CD14-positive monocyte (primary cell): ENCODE measurements at regions of chr19 and their contacts with region 1.

Region 1: GRCh38 chr19:16324384-16325160 is at the start of gene KLF2:
- DNase-seq: peak; percentile 95 to 97 (median 97)
- H3K4me3 ChIP-seq: peak within 1 kb of the TSS; percentile 65 to 98 (median 84)
- H3K4me3 Mint-ChIP-seq: peak within 1 kb of the TSS; percentile 72 to 100
- H3K27ac ChIP-seq: peak within 1 kb of the TSS; percentile 94 to 96
- H3K27ac Mint-ChIP-seq: peak within 1 kb of the TSS; percentile 79 to 98 (median 97)
- H3K4me1 ChIP-seq: peaks cover 29 to 56% of the 10 kb centered on the region in 2 donors
- H3K4me1 Mint-ChIP-seq: peaks cover 36% of the 10 kb centered on the region
- H3K27me3 ChIP-seq: peaks cover 0 to 5% of the 10 kb centered on the region in 2 donors
- H3K27me3 Mint-ChIP-seq: peaks cover 14 to 21% (median 16%) of the 10 kb centered on the region in 3 donors
- CTCF ChIP-seq: no peak
- polyA plus RNA-seq, gene KLF2: 34.0 to 331 (median 51.4) TPM

Region 2: GRCh38 chr19:16168465-16169081 is 156.0 kb before region 1 on chr19:
- intact Hi-C with region 1: no loop called
- DNase-seq: peak; percentile 68 to 78 (median 73)
- H3K4me3 ChIP-seq: no peak overlapping the region
- H3K4me3 Mint-ChIP-seq: peak overlapping the region in 1 of 2 donors; percentile 57
- H3K27ac ChIP-seq: peak overlapping the region; percentile 63 to 81
- H3K27ac Mint-ChIP-seq: peak overlapping the region; percentile 69 to 92 (median 87)
- H3K4me1 ChIP-seq: peaks cover 22 to 32% of the 10 kb centered on the region in 2 donors
- H3K4me1 Mint-ChIP-seq: peaks cover 27% of the 10 kb centered on the region
- H3K27me3 ChIP-seq: no peaks in the 10 kb centered on the region
- H3K27me3 Mint-ChIP-seq: peaks cover 0 to 2% (median 0%) of the 10 kb centered on the region in 3 donors
- CTCF ChIP-seq: no peak

Region 3: GRCh38 chr19:16197622-16198369 is 126.8 kb before region 1 on chr19 and contains the start of gene AP1M1:
- intact Hi-C with region 1: loop called in 1 of 2 experiments (anchors 5 kb)
- DNase-seq: peak; percentile 98 to 100 (median 98)
- H3K4me3 ChIP-seq: peak within 1 kb of the TSS; percentile 96 to 98 (median 96)
- H3K4me3 Mint-ChIP-seq: peak within 1 kb of the TSS; percentile 82 to 89
- H3K27ac ChIP-seq: peak within 1 kb of the TSS; percentile 59 to 89
- H3K27ac Mint-ChIP-seq: peak within 1 kb of the TSS; percentile 88 to 96 (median 95)
- H3K4me1 ChIP-seq: peaks cover 30 to 40% of the 10 kb centered on the region in 2 donors
- H3K4me1 Mint-ChIP-seq: peaks cover 34% of the 10 kb centered on the region
- H3K27me3 ChIP-seq: no peaks in the 10 kb centered on the region
- H3K27me3 Mint-ChIP-seq: no peaks in the 10 kb centered on the region
- CTCF ChIP-seq: no peak
- polyA plus RNA-seq, gene AP1M1: 103 to 134 (median 133) TPM

Region 4: GRCh38 chr19:16247353-16248182 is 77.0 kb before region 1 on chr19:
- intact Hi-C with region 1: loop called (anchors 5 kb)
- DNase-seq: peak; percentile 81 to 88 (median 84)
- H3K4me3 ChIP-seq: peak overlapping the region in 2 of 3 experiments; percentile 5 to 22
- H3K4me3 Mint-ChIP-seq: peak overlapping the region; percentile 51 to 78
- H3K27ac ChIP-seq: peak overlapping the region in 1 of 2 donors; percentile 7
- H3K27ac Mint-ChIP-seq: peak overlapping the region; percentile 71 to 90 (median 84)
- H3K4me1 ChIP-seq: peaks cover 24 to 29% of the 10 kb centered on the region in 2 donors
- H3K4me1 Mint-ChIP-seq: peaks cover 24% of the 10 kb centered on the region
- H3K27me3 ChIP-seq: no peaks in the 10 kb centered on the region
- H3K27me3 Mint-ChIP-seq: peaks cover 1 to 5% (median 3%) of the 10 kb centered on the region in 3 donors
- CTCF ChIP-seq: peak; percentile 94

Region 5: GRCh38 chr19:16283210-16284061 is 41.1 kb before region 1 on chr19:
- intact Hi-C with region 1: loop called (anchors 2 kb)
- DNase-seq: peak; percentile 68 to 76 (median 72)
- H3K4me3 ChIP-seq: peak overlapping the region; percentile 4 to 60 (median 17)
- H3K4me3 Mint-ChIP-seq: peak overlapping the region; percentile 73 to 83
- H3K27ac ChIP-seq: peak overlapping the region; percentile 92 to 93
- H3K27ac Mint-ChIP-seq: peak overlapping the region; percentile 97 to 99 (median 98)
- H3K4me1 ChIP-seq: peaks cover 73 to 87% of the 10 kb centered on the region in 2 donors
- H3K4me1 Mint-ChIP-seq: peaks cover 85% of the 10 kb centered on the region
- H3K27me3 ChIP-seq: no peaks in the 10 kb centered on the region
- H3K27me3 Mint-ChIP-seq: peaks cover 3 to 19% (median 3%) of the 10 kb centered on the region in 3 donors
- CTCF ChIP-seq: no peak

Region 6: DNA sequence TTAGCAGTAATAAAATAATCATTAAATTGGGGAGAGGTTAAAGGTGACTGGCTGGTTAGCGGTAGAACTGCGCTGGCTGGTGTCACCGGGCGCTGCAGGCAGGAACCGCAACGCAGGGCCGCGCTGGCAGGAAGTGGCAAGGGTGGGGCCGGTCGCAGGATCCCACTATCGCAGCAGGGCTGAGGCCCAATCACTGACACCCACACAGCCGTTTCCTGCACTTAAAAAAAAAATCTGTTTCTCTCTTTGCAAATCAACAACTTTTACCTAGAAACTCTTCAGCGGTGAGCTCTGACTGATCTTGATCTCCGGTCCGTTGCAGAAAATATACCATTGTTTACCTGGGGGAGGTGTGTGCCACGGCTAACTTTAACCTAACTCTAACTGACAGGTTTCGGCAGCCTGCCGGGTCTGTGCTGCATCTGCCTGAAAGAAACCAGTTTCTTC is 47.0 kb after region 1 on chr19:
- intact Hi-C with region 1: loop called in 1 of 2 experiments (anchors 5 kb)
- DNase-seq: peak; percentile 67 to 73 (median 69)
- H3K4me3 ChIP-seq: peak overlapping the region in 2 of 3 experiments; percentile 10 to 68
- H3K4me3 Mint-ChIP-seq: peak overlapping the region; percentile 65 to 89
- H3K27ac ChIP-seq: peak overlapping the region; percentile 77 to 88
- H3K27ac Mint-ChIP-seq: peak overlapping the region; percentile 92 to 96 (median 94)
- H3K4me1 ChIP-seq: peaks cover 77 to 87% of the 10 kb centered on the region in 2 donors
- H3K4me1 Mint-ChIP-seq: peaks cover 27% of the 10 kb centered on the region
- H3K27me3 ChIP-seq: no peaks in the 10 kb centered on the region
- H3K27me3 Mint-ChIP-seq: no peaks in the 10 kb centered on the region
- CTCF ChIP-seq: no peak

Region 7: DNA sequence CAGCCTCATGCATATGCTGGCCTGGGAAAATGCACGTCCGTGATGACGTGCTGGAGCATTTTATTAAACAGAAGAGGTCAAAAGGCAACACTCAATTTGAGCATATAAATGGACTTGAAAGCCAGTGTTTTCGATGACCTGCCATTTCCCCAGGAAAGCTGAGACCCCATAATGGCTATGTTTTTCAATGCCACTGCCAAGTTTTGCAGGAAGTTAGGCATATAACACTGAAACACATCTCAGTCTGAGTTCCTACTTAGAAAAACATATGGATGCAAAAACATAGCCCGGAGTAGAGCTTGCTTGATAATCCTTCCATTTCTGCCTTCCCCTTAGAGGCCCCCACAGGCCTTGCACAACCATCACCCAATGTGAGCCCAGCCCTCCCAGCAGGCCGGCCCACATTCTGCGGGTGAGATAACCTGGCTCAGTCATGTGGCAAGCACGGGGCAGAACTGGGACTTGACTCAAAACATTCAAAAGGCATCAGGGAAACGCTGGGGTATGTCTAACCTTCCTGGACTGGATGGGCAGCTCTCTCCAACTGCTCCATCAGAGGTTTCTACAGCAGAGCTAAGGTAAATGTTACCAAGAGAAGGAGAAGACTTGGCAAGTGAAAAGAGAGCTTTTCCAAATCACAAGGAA is 122.3 kb after region 1 on chr19:
- intact Hi-C with region 1: loop called in 1 of 2 experiments (anchors 5 kb)
- DNase-seq: peak; percentile 74 to 87 (median 81)
- H3K4me3 ChIP-seq: peak overlapping the region in 1 of 3 experiments; percentile 16
- H3K4me3 Mint-ChIP-seq: peak overlapping the region; percentile 40 to 76
- H3K27ac ChIP-seq: peak overlapping the region; percentile 70 to 81
- H3K27ac Mint-ChIP-seq: peak overlapping the region; percentile 96 to 99 (median 98)
- H3K4me1 ChIP-seq: peaks cover 77 to 83% of the 10 kb centered on the region in 2 donors
- H3K4me1 Mint-ChIP-seq: peaks cover 84% of the 10 kb centered on the region
- H3K27me3 ChIP-seq: no peaks in the 10 kb centered on the region
- H3K27me3 Mint-ChIP-seq: no peaks in the 10 kb centered on the region
- CTCF ChIP-seq: no peak